Dorsolateral prefrontal cortex (tissue), 120 donors: ENCODE measurements at regions of chr10 and their contacts with region 1.

Region 1: DNA sequence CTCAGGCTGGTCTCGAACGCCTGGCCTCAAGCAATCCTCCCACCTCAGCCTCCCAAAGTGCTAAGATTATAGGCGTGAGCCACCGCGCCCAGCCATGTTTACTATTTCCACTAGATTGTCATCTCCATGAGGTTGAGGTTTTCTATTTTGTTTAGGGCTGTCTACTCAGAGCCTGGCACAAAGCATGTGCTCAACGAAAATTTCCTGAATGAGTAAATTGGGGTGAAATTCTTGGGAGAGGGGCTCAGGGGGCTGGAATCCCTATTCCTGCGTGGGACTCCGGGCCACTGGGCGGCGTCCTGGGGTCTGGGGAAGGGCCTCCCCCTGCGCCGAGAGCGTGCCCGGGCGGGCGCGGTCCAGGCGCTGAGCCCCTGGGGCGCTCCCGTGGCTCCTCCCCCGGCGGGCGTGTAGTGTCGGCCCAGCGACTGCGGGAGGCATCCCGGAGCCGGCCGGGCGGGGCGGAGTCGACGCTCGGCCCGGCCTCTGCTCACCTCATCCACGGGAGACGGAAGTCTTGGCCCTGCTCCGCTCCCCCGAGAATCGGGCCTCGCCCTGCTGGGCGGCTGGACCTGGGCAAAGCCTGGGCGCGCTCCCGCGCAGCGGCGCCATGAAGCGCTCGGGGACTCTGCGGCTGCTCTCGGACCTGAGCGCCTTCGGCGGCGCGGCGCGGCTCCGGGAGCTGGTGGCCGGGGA is at the start of gene HPS6:
- DNase-seq: peak; percentile 61 to 91 (median 79)
- H3K4me3 ChIP-seq: peak within 1 kb of the TSS; percentile 49 to 98 (median 90)
- H3K27ac ChIP-seq: peak within 1 kb of the TSS in 58 of 59 donors; percentile 24 to 94 (median 84)
- H3K27me3 ChIP-seq: no peaks in the 10 kb centered on the region
- CTCF ChIP-seq: peak in 50 of 56 donors; percentile 5 to 65 (median 40)
- total RNA-seq, gene HPS6: 8.7 to 18.4 (median 13.9) TPM

Region 2: DNA sequence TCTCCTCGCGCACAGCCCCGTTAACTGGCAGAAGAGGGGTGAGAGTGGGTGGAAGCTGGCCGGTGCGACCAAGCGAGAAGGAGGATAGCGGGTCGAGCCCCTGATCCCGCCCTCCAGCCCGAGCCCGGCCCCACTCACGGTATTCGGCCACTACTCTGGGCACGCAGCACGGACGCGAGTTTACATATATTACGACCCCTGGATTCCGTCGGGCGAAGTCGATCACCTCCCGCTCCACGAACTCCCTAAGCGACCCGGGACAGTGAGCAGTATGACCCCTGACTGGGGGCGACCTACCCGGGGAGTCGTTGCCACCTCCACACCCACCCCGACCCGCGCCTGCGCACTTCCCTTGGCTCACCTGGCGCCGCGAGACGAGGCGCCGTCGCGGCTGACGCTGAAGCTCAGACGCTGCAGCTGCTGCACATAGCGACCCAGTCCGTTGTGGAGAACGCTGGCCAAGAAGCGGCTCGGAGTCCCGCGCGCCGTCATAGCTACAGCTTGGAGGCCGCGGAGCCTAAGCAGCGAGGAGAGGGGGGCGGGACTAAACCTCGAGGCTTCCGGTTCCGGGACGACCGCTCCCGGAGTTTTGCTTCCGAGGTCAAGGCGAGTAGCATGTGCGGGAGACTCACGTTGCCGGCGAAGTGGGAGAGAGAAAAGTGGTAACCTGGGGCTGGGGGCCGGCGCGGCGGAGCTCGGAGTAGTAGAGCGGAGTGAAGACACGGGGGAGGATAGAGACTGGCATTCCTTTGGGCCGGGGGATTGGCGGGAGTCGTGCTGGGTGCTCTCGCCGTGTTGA is 1077.9 kb before region 1 on chr10 and contains the starts of genes MRPL43 and TWNK:
- intact Hi-C with region 1: no loop called
- DNase-seq: peak; percentile 87 to 95 (median 92)
- H3K4me3 ChIP-seq: peak within 1 kb of the TSS; percentile 69 to 99 (median 89)
- H3K27ac ChIP-seq: peak within 1 kb of the TSS in 55 of 59 donors; percentile 26 to 96 (median 81)
- H3K27me3 ChIP-seq: no peaks in the 10 kb centered on the region
- CTCF ChIP-seq: peak in 20 of 56 donors; percentile 4 to 45 (median 22)
- total RNA-seq, gene MRPL43: 42.1 to 81.4 (median 59.6) TPM
- total RNA-seq, gene TWNK: 3.4 to 10.0 (median 5.4) TPM

Region 3: DNA sequence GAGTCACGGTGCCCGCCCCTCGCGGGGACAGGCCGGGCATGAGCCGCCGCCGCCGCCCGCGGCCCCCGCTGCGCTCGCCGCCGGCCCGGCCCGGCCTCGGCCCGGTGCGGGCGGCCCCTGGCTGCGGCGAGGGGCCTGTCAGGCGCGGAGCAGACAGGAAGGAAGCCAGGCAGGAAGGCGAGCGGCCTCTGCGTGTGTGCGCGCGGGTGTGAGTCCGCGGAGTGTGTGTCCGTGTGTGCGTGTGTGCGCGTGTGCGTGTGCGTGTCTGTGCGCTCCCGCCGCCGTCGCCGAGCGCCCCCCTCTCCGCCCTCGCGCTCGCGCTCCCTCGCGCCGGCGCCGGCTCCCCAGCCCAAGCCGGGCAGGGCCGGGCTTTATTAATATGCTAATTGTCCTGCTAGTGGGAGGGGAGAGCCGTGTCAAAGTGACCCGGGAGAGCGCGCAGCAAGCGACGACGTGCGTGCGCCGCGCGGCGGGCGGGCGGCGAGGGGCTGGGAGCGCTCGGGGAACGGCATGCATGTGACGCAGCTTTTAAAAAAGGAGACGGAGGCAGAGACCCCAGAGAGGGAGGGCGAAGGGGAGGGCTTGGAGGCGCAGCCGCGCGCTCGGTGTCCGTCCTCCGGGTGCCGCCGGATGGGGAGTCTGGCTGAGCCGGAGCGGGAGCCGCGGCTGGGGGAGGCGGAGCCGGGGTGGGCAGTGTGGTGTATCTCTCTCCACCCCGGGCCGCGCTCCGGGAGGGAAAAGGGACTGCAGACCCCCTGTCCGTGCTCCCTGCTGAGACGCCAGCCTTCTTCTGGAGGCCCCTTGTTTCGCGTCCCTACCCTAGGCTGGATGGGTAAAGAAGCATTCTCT is 55.4 kb after region 1 on chr10 and contains the start of gene LDB1:
- intact Hi-C with region 1: loop called in 1 of 2 experiments (anchors 2 kb)
- DNase-seq: peak; percentile 67 to 90 (median 84)
- H3K4me3 ChIP-seq: peak within 1 kb of the TSS; percentile 62 to 96 (median 86)
- H3K27ac ChIP-seq: peak within 1 kb of the TSS; percentile 76 to 100 (median 98)
- H3K27me3 ChIP-seq: no peaks in the 10 kb centered on the region
- CTCF ChIP-seq: peak in 40 of 56 donors; percentile 2 to 69 (median 37)
- total RNA-seq, gene LDB1: 51.3 to 110 (median 80.0) TPM